Posterior cingulate gyrus (tissue), 11 donors: ENCODE measurements at regions of chr13 and their contacts with region 1.

Region 1: DNA sequence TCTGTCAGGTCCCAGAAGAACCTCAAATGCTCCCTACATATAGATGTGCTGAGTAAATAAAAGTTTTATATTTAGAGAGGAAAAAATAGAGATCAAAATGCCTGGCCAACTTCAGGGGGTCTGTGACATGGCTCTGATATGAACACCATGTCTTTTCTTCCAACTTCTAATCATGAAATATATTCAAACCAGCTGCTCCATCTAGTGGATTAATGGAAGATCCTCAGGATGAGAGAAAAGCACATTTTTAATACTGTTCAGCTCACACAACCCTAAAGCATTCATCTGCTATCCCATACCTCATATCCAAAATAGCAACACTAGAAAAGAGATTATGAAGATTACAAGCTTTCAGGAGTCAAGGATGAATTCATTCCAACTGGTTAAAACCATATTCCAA is 56.0 kb upstream of the DOCK9 start:
- DNase-seq: no peak

Region 2: GRCh38 chr13:98842864-98843481 is 190.8 kb before region 1 on chr13:
- intact Hi-C with region 1: loop called (anchors 5 kb)
- DNase-seq: peak; percentile 58 to 96 (median 76)

Region 3: GRCh38 chr13:98890186-98890585 is 143.6 kb before region 1 on chr13:
- intact Hi-C with region 1: loop called (anchors 2 kb)
- DNase-seq: peak in 8 of 10 donors; percentile 33 to 87 (median 56)

Region 4: DNA sequence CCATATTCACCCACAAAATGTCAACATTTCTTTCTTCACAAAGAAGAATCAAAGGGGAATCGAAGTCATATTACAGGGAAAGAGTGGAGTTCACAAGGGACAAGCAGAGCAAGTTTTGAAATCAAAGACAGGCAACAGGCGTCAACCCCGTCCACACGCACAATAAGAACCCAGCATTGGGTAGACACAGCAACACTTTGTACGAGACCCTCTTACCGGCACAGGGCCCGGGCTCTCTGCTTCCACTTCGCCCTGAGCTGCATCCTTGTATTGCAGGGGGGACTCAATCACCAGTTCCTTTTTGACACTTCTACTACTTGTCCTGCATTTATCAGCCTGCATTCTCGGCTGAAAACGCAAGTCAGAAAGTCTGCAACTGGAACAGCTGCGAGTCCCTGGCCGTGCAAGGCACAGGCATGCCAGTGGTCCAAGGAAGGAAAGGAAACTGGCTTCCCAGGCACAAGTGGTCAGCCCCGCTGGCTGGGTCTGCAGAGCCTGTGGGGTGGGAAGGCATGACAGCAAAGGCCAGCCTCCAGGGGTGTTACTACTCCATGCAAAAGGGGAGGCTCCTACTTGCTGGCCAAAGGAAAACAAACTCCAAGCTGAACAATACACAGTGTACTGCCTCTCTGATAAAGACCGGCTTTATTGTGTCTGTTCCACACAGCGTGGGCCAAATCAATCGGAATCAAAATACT is 56.1 kb before region 1 on chr13 and contains the start of gene DOCK9:
- intact Hi-C with region 1: loop called (anchors 5 kb)
- DNase-seq: peak; percentile 59 to 97 (median 78)